Activated CD8-positive, alpha-beta T cell treated with anti-CD3 and anti-CD28 coated beads, Interleukin-2, amount 10 ng/mL, durations not matched to agents 7 days and 5 days (primary cell): ENCODE measurements at regions of chr4 and their contacts with region 1.

Region 1: GRCh38 chr4:173301518-173302201 is 32.5 kb downstream of the HMGB2 start:
- DNase-seq: peak; percentile 46
- ATAC-seq: peak; percentile 47
- H3K4me3 Mint-ChIP-seq: no peak overlapping the region
- H3K27ac Mint-ChIP-seq: no peak overlapping the region
- H3K4me1 Mint-ChIP-seq: no peaks in the 10 kb centered on the region
- H3K27me3 Mint-ChIP-seq: no peaks in the 10 kb centered on the region

Region 2: DNA sequence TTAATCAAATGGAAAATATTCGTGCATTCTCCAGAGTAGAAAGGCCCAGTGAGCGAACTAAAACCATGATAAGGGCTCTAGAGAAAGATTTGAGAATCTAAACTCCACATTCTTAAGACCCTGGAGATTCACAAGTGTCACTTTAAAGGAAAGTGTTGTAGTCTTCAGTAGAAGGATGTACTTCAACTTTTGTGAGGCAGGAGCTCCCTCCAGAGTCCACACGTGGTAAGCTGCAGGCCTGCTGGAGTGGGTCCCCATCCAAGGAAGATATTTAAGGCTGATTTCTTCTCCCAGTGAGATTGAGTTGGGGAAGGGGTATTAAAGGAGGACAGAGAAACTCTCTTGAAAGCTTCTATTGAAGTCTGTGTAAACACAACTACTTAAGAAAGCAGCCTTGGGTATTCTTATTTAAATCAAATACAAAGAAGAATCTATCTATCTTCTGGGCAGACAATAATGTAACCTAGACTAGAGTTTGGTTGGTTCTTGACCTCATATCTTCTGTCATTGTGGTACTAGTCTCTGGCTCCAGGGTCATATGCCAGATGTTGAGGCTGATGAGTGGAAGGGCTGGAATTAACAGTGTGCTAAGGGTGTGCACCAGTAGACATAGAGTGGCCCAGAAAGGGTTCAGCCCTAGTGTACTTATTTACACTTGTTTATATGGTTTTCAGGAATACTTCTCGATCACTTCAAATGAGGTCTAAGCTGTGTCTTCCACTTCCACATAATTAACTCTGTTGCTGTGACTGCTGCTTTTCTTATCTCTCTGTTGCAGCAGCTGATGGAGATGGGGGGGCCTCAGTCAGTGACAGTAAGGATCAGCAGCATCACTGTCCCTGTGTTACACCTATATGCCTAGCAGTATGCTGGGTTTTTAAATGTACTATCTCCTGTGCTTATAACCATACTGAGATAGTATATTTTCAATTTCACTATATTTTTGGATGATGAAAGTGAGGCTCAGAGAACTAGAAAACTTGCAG is 43.6 kb before region 1 on chr4:
- CTCF ChIA-PET with region 1: interaction called, 17 read pairs
- POLR2A ChIA-PET with region 1: no interaction called
- DNase-seq: peak; percentile 68
- ATAC-seq: peak; percentile 84
- H3K4me3 Mint-ChIP-seq: no peak overlapping the region
- H3K27ac Mint-ChIP-seq: no peak overlapping the region
- H3K4me1 Mint-ChIP-seq: no peaks in the 10 kb centered on the region
- H3K27me3 Mint-ChIP-seq: no peaks in the 10 kb centered on the region

Region 3: DNA sequence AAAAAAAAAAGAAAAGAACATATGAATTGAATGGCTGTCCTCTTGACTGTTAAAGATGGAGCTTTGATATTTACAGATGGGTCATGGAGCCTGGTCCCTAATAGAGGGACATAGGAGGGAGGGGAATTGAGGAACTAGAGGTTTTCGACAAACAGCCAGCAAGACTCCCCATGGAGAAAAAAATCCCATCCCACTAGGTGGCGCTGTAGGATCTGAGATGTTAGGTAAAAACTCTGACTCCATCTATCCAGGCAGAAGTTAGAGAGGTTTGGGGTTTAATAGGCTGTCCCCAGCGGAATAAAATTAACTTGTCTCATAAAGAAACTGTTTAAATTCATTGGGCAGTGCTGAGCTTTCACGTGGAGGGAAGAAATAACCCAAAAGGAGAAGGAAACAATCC is 13.4 kb before region 1 on chr4:
- CTCF ChIA-PET with region 1: interaction called, 94 read pairs
- POLR2A ChIA-PET with region 1: no interaction called
- DNase-seq: peak; percentile 83
- ATAC-seq: peak; percentile 62
- H3K4me3 Mint-ChIP-seq: peak overlapping the region; percentile 69
- H3K27ac Mint-ChIP-seq: peak overlapping the region; percentile 77
- H3K4me1 Mint-ChIP-seq: peaks cover 16% of the 10 kb centered on the region
- H3K27me3 Mint-ChIP-seq: no peaks in the 10 kb centered on the region

Region 4: DNA sequence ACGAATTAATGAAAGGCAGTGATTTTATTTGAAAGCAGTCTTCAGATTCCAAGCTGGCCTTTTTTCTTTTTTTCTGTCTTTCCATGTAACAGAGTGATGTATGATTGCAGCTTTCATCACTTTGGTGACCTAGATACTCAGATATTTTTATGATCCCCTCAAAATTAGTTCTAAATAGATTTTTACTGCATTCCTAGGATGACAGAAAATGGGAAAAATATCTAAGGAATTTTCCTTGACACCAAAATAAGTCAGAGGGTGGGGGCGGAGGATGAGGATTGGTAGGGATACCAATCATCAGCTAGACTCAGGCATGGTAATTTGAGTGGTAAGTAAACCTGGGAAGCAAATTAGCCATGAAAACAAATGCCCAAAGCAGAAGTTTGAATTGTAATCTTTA is 44.4 kb after region 1 on chr4:
- CTCF ChIA-PET with region 1: interaction called, 10 read pairs
- POLR2A ChIA-PET with region 1: no interaction called
- DNase-seq: no peak
- ATAC-seq: no peak
- H3K4me3 Mint-ChIP-seq: no peak overlapping the region
- H3K27ac Mint-ChIP-seq: no peak overlapping the region
- H3K4me1 Mint-ChIP-seq: no peaks in the 10 kb centered on the region
- H3K27me3 Mint-ChIP-seq: peaks cover 17% of the 10 kb centered on the region

Region 5: DNA sequence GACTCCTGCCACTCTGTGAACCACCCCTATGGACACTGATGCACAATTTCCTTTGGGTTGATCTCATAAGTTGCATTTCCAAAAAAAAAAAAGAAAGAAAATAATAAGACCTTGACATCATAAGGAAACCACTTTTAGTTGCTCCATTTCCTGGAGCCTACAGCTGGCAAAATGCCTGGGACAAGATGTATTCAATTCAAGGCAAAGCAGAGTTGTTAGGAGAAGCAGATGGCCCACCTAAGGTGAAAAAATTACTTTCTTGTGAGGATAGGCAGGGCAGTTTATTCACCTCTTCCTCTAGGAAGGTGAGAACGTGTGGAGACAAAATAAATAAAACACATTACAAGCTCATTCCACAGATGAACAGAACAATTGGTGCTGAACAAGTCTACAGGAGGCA is 111.4 kb after region 1 on chr4:
- CTCF ChIA-PET with region 1: interaction called, 28 read pairs
- POLR2A ChIA-PET with region 1: no interaction called
- DNase-seq: no peak
- ATAC-seq: no peak
- H3K4me3 Mint-ChIP-seq: no peak overlapping the region
- H3K27ac Mint-ChIP-seq: no peak overlapping the region
- H3K4me1 Mint-ChIP-seq: no peaks in the 10 kb centered on the region
- H3K27me3 Mint-ChIP-seq: peaks cover 3% of the 10 kb centered on the region

Region 6: GRCh38 chr4:173777421-173777820 is 475.8 kb after region 1 on chr4:
- CTCF ChIA-PET with region 1: no interaction called
- POLR2A ChIA-PET with region 1: no interaction called
- DNase-seq: no peak
- ATAC-seq: no peak
- H3K4me3 Mint-ChIP-seq: no peak overlapping the region
- H3K27ac Mint-ChIP-seq: no peak overlapping the region
- H3K4me1 Mint-ChIP-seq: no peaks in the 10 kb centered on the region
- H3K27me3 Mint-ChIP-seq: no peaks in the 10 kb centered on the region